B cell (primary cell): ENCODE measurements at regions of chr4 and their contacts with region 1.

Region 1: GRCh38 chr4:48774760-48775710 is 5.0 kb downstream of the FRYL start:
- DNase-seq: no peak
- ATAC-seq: no peak
- H3K4me3 ChIP-seq: no peak overlapping the region
- H3K4me3 Mint-ChIP-seq: no peak overlapping the region
- H3K27ac ChIP-seq: no peak overlapping the region
- H3K27ac Mint-ChIP-seq: no peak overlapping the region
- H3K4me1 ChIP-seq: peaks cover 43 to 59% of the 10 kb centered on the region in 2 donors
- H3K4me1 Mint-ChIP-seq: peaks cover 70% of the 10 kb centered on the region
- H3K27me3 ChIP-seq: no peaks in the 10 kb centered on the region
- H3K27me3 Mint-ChIP-seq: no peaks in the 10 kb centered on the region
- CTCF ChIP-seq: no peak

Region 2: GRCh38 chr4:48706736-48707135 is 68.3 kb before region 1 on chr4:
- CTCF ChIA-PET with region 1: no interaction called
- POLR2A ChIA-PET with region 1: no interaction called
- intact Hi-C with region 1: no loop called
- DNase-seq: no peak
- ATAC-seq: no peak
- H3K4me3 ChIP-seq: no peak overlapping the region
- H3K4me3 Mint-ChIP-seq: no peak overlapping the region
- H3K27ac ChIP-seq: no peak overlapping the region
- H3K27ac Mint-ChIP-seq: no peak overlapping the region
- H3K4me1 ChIP-seq: no peaks in the 10 kb centered on the region
- H3K4me1 Mint-ChIP-seq: peaks cover 13% of the 10 kb centered on the region
- H3K27me3 ChIP-seq: no peaks in the 10 kb centered on the region
- H3K27me3 Mint-ChIP-seq: no peaks in the 10 kb centered on the region
- CTCF ChIP-seq: no peak

Region 3: GRCh38 chr4:48813964-48814363 is 38.9 kb after region 1 on chr4:
- CTCF ChIA-PET with region 1: interaction called, 4 read pairs
- POLR2A ChIA-PET with region 1: interaction called, 11 read pairs
- intact Hi-C with region 1: no loop called
- DNase-seq: no peak
- ATAC-seq: no peak
- H3K4me3 ChIP-seq: no peak overlapping the region
- H3K4me3 Mint-ChIP-seq: no peak overlapping the region
- H3K27ac ChIP-seq: no peak overlapping the region
- H3K27ac Mint-ChIP-seq: no peak overlapping the region
- H3K4me1 ChIP-seq: peaks cover 13 to 25% of the 10 kb centered on the region in 2 donors
- H3K4me1 Mint-ChIP-seq: peaks cover 29% of the 10 kb centered on the region
- H3K27me3 ChIP-seq: no peaks in the 10 kb centered on the region
- H3K27me3 Mint-ChIP-seq: no peaks in the 10 kb centered on the region
- CTCF ChIP-seq: no peak

Region 4: GRCh38 chr4:48858130-48858529 is 83.1 kb after region 1 on chr4:
- CTCF ChIA-PET with region 1: no interaction called
- POLR2A ChIA-PET with region 1: no interaction called
- intact Hi-C with region 1: no loop called
- DNase-seq: no peak
- ATAC-seq: no peak
- H3K4me3 ChIP-seq: no peak overlapping the region
- H3K4me3 Mint-ChIP-seq: no peak overlapping the region
- H3K27ac ChIP-seq: no peak overlapping the region
- H3K27ac Mint-ChIP-seq: no peak overlapping the region
- H3K4me1 ChIP-seq: no peaks in the 10 kb centered on the region
- H3K4me1 Mint-ChIP-seq: no peaks in the 10 kb centered on the region
- H3K27me3 ChIP-seq: no peaks in the 10 kb centered on the region
- H3K27me3 Mint-ChIP-seq: no peaks in the 10 kb centered on the region
- CTCF ChIP-seq: no peak